ENCODE measurements at regions of chrX and their contacts with region 1.

Region 1: GRCh38 chrX:136168929-136169735 is 21.8 kb downstream of the FHL1 start:
- DNase-seq: peak in 2 of 5 donors; percentile 29 to 69
- H3K4me3 ChIP-seq: no peak overlapping the region
- H3K27ac ChIP-seq: peak overlapping the region in 1 of 2 donors; percentile 6
- H3K4me1 ChIP-seq: peaks cover 4% of the 10 kb centered on the region
- H3K27me3 ChIP-seq: no peaks in the 10 kb centered on the region
- CTCF ChIP-seq: no peak
- EP300 ChIP-seq: no peak
- POLR2A ChIP-seq: no peak

Region 2: DNA sequence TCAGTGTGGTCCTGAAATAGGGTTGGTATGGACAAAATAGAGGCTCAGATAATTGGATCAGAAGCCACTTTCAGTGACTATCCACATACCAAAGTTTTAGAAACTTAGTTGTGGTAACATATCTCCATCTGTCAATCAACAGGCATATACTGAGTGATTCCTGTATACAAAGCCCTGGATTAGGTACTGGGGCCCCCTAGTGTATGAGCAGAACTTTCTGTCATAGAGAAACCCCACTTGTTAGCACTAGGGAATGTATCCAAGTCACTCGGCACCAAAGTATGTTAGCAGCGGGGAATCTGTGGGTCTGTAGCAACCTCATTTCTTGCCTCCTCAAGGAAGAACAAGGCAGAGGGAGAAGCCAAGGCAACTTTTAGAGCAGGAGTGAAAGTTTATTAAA is 31.3 kb after region 1 on chrX:
- intact Hi-C with region 1: loop called in 2 of 4 experiments (anchors 5 kb)
- DNase-seq: no peak
- H3K4me3 ChIP-seq: no peak overlapping the region
- H3K27ac ChIP-seq: no peak overlapping the region
- H3K4me1 ChIP-seq: peaks cover 3% of the 10 kb centered on the region
- H3K27me3 ChIP-seq: no peaks in the 10 kb centered on the region
- CTCF ChIP-seq: no peak
- EP300 ChIP-seq: no peak
- POLR2A ChIP-seq: no peak

Region 3: GRCh38 chrX:136209016-136209738 is 40.0 kb after region 1 on chrX:
- intact Hi-C with region 1: loop called in 2 of 4 experiments (anchors 5 kb)
- DNase-seq: peak; percentile 46 to 71 (median 67)
- H3K4me3 ChIP-seq: no peak overlapping the region
- H3K27ac ChIP-seq: peak overlapping the region in 1 of 2 donors; percentile 14
- H3K4me1 ChIP-seq: no peaks in the 10 kb centered on the region
- H3K27me3 ChIP-seq: no peaks in the 10 kb centered on the region
- CTCF ChIP-seq: peak; percentile 20 to 60 (median 56)
- EP300 ChIP-seq: no peak
- POLR2A ChIP-seq: no peak